AG04450 (cell line): ENCODE measurements at regions of chr6 and their contacts with region 1.

Region 1: GRCh38 chr6:44655412-44656342 is 268.2 kb downstream of the CDC5L start:
- DNase-seq: no peak
- H3K4me3 ChIP-seq: no peak overlapping the region; the same call in 1 of the 2 replicates
- H3K27ac ChIP-seq: no peak overlapping the region
- H3K27me3 ChIP-seq: peaks cover 4% of the 10 kb centered on the region
- CTCF ChIP-seq: peak; percentile 92

Region 2: GRCh38 chr6:44498436-44498835 is 157.2 kb before region 1 on chr6:
- CTCF ChIA-PET with region 1: no interaction called
- POLR2A ChIA-PET with region 1: no interaction called
- DNase-seq: no peak
- H3K4me3 ChIP-seq: no peak overlapping the region
- H3K27ac ChIP-seq: no peak overlapping the region
- H3K27me3 ChIP-seq: peaks cover 46% of the 10 kb centered on the region
- CTCF ChIP-seq: no peak

Region 3: DNA sequence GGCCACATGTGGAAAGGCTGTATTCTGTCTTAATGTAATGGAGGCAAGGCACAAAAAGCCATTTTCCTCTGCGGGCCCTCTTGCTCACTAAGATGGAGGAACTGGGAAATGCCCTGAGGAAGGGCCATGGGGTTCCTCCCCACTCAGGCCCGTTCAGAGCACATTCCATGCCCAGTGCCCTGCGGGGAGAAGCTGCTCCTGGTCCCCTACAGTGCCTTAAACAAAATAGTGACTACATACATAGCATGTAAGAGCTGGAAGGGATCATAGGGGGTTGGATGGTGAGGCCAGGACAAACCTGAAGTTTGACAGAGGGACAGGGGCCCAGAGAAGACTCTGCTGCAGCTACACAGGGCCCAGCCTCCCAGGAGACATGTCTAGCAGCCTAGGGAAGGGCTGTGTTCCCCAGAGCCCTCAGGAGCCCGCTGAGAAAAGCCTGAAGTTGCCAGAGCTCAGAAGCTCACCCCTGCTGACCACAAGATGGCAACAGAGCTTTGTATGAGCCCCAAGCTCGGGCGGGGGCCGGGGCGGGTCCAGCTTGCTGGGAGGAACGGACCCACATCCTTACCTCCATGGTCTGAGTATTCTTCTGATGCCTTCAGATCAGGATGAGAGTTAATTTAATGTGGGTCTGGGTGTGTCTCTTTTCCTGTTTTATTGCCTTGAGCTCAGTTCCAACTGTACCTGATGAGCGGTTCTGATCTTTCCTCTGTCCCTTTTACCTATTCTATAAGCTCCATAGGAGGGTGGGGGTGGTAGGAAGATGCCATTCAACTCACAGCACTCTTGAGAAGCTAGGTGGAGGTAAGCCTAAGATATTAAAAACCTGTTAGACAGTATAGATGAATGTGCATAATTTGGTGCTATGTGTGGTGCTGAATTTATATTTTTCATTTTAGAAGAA is 25.3 kb before region 1 on chr6:
- CTCF ChIA-PET with region 1: interaction called, 19 read pairs
- POLR2A ChIA-PET with region 1: no interaction called
- DNase-seq: peak; percentile 23
- H3K4me3 ChIP-seq: no peak overlapping the region
- H3K27ac ChIP-seq: no peak overlapping the region
- H3K27me3 ChIP-seq: peaks cover 20% of the 10 kb centered on the region
- CTCF ChIP-seq: peak; percentile 71

Region 4: GRCh38 chr6:44667668-44668390 is 12.2 kb after region 1 on chr6:
- CTCF ChIA-PET with region 1: interaction called, 19 read pairs
- POLR2A ChIA-PET with region 1: no interaction called
- DNase-seq: no peak
- H3K4me3 ChIP-seq: no peak overlapping the region
- H3K27ac ChIP-seq: peak overlapping the region; percentile 31
- H3K27me3 ChIP-seq: peaks cover 13% of the 10 kb centered on the region
- CTCF ChIP-seq: peak; percentile 52

Region 5: DNA sequence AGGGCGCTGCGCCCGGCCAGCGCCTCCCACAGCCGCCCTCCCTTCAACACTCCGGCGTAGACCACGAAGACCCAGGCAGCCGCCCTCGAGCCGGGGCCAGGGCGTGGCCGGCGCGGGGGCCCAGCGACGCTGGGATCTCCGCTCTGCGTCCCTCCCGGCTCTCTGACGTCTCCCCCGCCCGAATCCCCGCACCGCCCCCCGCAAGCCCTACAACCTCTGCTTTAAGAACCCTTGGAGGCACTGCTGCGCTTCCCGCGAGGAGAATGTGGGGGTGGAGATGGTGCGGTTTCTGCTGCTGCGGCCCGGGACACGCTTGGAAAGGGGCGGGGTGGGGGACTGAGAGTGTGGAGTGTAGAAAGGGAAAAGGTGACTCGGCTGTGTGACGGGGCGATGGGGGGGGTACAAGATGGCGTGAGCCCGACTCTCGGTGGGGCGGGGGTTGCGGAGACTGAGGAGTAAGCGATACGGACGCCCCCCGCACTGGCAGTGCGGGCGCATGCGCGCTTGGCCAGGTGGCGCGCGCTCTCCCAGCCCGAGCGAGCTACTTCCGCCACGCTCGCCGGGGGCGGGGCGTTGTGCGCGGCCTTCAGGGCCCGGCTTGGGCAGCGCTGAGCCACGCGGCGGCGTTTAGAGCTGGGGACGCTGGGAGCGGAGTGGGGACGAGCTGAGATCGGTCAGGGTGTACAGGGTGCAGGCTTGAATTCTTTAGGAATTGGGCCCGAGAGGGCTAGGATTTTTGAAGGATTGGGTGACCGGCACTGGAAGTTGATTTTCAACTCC is 722.1 kb after region 1 on chr6 and contains the start of gene SUPT3H:
- CTCF ChIA-PET with region 1: interaction called, 12 read pairs
- POLR2A ChIA-PET with region 1: no interaction called
- DNase-seq: peak; percentile 75
- H3K4me3 ChIP-seq: peak within 1 kb of the TSS; percentile 78
- H3K27ac ChIP-seq: peak within 1 kb of the TSS; percentile 95
- H3K27me3 ChIP-seq: no peaks in the 10 kb centered on the region
- CTCF ChIP-seq: peak; percentile 29; the same call in 1 of the 2 replicates
- polyA plus RNA-seq, gene SUPT3H: 6.0 and 8.7 TPM in 2 replicates

Region 6: DNA sequence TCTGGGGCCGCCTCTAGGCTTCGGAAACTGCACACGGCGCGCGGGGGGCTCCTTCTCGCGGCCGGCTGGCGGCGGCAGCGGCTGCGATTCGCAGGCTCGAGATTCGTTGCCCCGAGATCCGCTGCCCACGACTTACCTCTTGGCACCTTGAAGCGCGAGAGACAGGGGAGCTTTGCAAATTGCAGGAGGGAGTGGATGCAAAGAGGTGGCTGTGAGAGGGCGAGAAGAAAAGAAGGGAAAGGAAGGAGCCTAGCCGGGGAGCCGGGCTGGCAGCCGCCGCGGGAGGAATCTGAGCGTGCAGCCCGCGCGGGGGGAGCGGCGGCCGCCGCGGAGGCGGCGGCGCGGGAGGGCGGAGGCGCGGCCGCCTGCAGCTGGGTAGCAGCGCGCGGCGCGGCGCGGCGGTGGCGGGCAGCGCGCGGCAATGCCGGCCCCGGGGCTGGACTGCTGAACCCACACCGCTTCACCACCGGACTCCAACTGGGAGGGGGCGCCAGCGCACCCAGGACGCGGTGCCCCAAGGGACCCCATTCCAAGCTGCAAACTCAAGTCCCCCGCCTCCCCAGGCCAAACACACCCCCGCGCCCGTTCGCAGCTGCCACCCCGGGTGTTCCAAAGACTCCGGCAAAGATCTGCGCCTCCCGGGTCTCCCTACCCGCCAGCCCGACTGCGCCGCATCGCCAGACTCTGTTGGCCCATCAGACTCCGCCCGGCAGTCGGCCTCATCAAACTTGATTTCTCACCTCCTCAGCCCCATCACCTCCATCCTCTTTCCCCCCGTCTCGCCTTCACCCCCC is 766.2 kb after region 1 on chr6:
- CTCF ChIA-PET with region 1: interaction called, 10 read pairs
- POLR2A ChIA-PET with region 1: no interaction called
- DNase-seq: no peak
- H3K4me3 ChIP-seq: peak overlapping the region; percentile 94
- H3K27ac ChIP-seq: peak overlapping the region; percentile 75
- H3K27me3 ChIP-seq: no peaks in the 10 kb centered on the region
- CTCF ChIP-seq: peak; percentile 55

Region 7: DNA sequence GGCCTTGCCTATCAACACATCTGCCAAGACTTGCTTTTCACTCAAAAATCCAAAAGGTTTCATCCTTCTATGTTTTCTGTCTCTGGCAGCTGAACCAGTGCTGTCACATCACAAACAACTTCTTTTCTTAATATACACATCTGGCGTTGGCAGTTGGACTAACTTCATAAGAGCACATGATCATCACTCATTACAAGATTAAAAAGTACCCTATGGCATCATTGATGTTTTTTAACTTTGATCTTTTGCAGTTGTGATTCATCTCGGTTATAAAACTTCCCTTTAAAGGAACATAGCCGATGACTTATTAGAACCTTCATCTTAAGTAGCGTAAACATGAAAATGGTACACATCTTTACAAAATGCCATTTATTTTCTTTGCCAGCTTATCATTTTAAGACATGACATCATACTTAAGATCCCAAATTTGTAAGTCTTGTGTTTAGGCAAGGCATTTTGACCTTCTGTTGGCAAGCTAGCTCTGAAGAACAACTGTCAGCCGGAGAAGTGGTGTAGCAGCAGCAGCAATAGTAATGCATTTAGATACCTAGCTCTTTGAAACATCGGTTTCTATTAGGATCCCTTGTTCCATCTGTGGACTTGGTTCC is 786.3 kb after region 1 on chr6:
- CTCF ChIA-PET with region 1: interaction called, 14 read pairs
- POLR2A ChIA-PET with region 1: no interaction called
- DNase-seq: no peak
- H3K4me3 ChIP-seq: no peak overlapping the region
- H3K27ac ChIP-seq: no peak overlapping the region
- H3K27me3 ChIP-seq: no peaks in the 10 kb centered on the region
- CTCF ChIP-seq: no peak

Region 8: DNA sequence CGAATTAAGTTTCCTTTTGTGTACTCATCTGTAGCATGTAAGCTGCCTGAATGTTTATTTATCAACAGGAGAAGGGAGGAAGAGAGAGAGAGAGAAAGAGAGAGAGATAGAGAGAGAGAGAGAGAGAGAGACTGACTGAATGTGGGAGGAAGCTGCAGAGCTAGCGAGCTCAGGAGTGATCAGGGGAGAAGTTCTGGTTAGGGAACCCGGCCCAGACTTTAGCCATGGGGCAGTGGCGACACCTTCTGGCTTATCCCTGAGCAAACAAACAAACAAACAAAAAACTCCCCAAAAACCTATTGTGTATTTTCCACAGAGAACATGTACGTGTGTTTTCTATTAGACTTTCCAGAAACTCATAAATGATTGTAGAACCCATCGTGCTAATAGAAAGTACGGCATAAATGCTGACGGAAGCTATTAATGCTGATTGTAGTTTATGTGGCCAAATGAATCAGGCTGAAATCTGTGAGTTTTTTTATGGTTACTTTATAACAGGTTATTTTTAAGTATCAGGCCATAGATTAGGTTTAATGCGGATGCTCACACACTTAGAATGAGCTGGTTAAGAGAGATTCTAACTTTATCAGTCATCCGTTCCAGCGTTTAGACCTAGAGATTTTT is 1267.2 kb after region 1 on chr6:
- CTCF ChIA-PET with region 1: interaction called, 24 read pairs
- POLR2A ChIA-PET with region 1: no interaction called
- DNase-seq: peak; percentile 16
- H3K4me3 ChIP-seq: no peak overlapping the region
- H3K27ac ChIP-seq: no peak overlapping the region
- H3K27me3 ChIP-seq: no peaks in the 10 kb centered on the region
- CTCF ChIP-seq: peak; percentile 77